H1 (cell line): ENCODE measurements at regions of chr10 and their contacts with region 1.

Region 1: DNA sequence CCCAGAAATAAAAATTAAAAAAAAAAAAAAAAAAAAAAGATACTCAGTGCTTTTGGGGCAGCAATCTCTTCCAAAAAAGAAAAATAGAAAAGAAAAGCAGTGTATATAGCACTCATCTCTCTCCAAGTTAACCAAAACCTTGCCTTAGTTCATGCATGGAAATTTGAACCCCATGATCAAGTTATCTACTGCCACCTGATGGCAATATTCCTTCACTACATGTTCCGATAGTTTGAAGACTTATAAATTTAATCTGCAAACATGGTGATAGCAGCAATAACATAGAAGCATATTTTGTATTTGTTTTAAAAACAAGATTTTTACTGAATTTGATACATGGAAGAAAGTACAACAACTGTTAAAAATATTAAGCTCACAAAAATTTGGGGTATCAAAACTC is 48.6 kb upstream of the SLIT1 start:
- DNase-seq: no peak
- H3K4me3 ChIP-seq: no peak overlapping the region
- H3K27ac ChIP-seq: no peak overlapping the region
- H3K4me1 ChIP-seq: no peaks in the 10 kb centered on the region
- H3K27me3 ChIP-seq: no peaks in the 10 kb centered on the region
- CTCF ChIP-seq: peak in 2 of 3 experiments; percentile 31 to 57; a peak in 2 of 4 replicates
- EP300 ChIP-seq: no peak
- POLR2A ChIP-seq: no peak
- RAD21 ChIP-seq: peak; percentile 70 to 75

Region 2: DNA sequence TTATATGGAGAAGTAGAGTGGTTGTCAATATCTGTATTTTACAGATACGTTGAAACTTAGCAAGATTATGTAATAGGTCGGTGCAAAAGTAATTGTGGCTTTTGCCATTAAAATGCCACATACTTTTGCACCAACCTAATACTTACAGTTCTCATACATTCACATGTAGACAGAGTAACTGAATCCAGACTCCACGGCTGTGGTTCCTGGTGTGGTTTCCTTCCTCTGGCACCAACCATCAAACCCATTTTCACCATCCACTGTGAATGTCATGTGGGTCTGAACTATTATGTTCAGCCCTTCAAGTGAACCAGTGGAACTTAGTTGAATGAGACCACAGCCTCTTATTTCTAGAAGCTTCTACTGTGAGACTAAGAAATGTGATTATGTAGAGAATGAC is 17.1 kb before region 1 on chr10:
- CTCF ChIA-PET with region 1: interaction called, 40 read pairs
- POLR2A ChIA-PET with region 1: interaction called, 3 read pairs
- DNase-seq: no peak
- H3K4me3 ChIP-seq: no peak overlapping the region
- H3K27ac ChIP-seq: no peak overlapping the region
- H3K4me1 ChIP-seq: peaks cover 0 to 4% (median under 1%) of the 10 kb centered on the region in 4 experiments; a peak in 2 of 7 replicates
- H3K27me3 ChIP-seq: no peaks in the 10 kb centered on the region
- CTCF ChIP-seq: no peak
- EP300 ChIP-seq: no peak
- POLR2A ChIP-seq: no peak
- RAD21 ChIP-seq: no peak

Region 3: GRCh38 chr10:97222326-97222961 is 12.0 kb before region 1 on chr10:
- CTCF ChIA-PET with region 1: interaction called, 40 read pairs
- POLR2A ChIA-PET with region 1: interaction called, 3 read pairs
- DNase-seq: peak in 1 of 2 experiments; percentile 17
- H3K4me3 ChIP-seq: no peak overlapping the region; a peak in 1 of 8 replicates
- H3K27ac ChIP-seq: no peak overlapping the region
- H3K4me1 ChIP-seq: peaks cover 0 to 7% (median 4%) of the 10 kb centered on the region in 4 experiments; a peak in 6 of 7 replicates
- H3K27me3 ChIP-seq: no peaks in the 10 kb centered on the region
- CTCF ChIP-seq: peak in 2 of 3 experiments; percentile 23 to 37; a peak in 2 of 4 replicates
- EP300 ChIP-seq: no peak
- POLR2A ChIP-seq: no peak
- RAD21 ChIP-seq: peak; percentile 50; a peak in 3 of 4 replicates